ENCODE measurements at regions of chr13 and their contacts with region 1.

Region 1: GRCh38 chr13:27980280-27980998 is 8.1 kb downstream of the URAD start:
- H3K4me3 Mint-ChIP-seq: no peak overlapping the region
- H3K27ac Mint-ChIP-seq: no peak overlapping the region
- H3K4me1 Mint-ChIP-seq: peaks cover 23% of the 10 kb centered on the region
- H3K27me3 Mint-ChIP-seq: peaks cover 83% of the 10 kb centered on the region

Region 2: GRCh38 chr13:26971990-26972887 is 1008.2 kb before region 1 on chr13:
- intact Hi-C with region 1: loop called (anchors 10 kb)
- H3K4me3 Mint-ChIP-seq: no peak overlapping the region
- H3K27ac Mint-ChIP-seq: no peak overlapping the region
- H3K4me1 Mint-ChIP-seq: no peaks in the 10 kb centered on the region
- H3K27me3 Mint-ChIP-seq: no peaks in the 10 kb centered on the region

Region 3: DNA sequence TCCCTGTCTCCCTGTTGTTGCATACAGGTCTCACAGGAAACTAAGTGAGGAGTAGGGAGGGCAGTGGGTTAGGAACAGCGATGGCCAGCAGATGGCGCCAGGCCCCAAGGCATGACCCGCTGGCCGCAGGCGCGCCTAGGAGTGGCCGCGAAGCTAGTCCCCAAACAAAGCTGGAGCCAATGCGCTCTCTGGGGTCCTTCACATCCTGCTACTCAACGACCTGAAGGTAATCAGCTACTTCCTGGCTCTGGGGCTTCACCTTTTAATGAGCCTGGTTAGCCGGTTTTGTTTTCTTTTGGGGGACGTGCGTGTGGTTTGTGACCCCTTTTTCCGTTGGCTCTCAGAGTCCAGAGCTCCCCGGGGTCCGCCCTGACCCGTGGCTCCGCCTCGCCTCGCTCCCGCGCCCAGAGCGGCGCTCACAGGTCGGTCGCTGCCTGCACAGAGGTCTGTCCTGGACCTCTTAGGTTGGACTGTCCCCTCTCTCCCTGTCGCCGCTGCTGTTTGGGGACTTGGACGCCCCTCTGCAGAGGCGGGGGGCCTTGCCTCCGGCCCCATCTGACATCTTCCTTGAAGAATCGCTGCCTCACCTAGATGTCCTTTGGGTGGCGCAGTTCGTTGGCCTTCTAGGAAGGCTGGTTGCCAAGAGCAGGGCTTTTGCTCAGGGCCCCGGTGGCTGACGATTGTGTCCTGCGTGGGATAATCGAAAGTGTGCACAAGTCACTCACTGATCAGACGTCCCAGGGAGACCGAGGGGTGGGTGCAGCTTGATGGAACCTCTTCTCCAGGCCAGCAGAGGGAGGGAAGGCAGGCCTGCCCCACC is 618.2 kb before region 1 on chr13:
- intact Hi-C with region 1: loop called (anchors 1 kb)
- H3K4me3 Mint-ChIP-seq: peak overlapping the region; percentile 45
- H3K27ac Mint-ChIP-seq: no peak overlapping the region
- H3K4me1 Mint-ChIP-seq: no peaks in the 10 kb centered on the region
- H3K27me3 Mint-ChIP-seq: peaks cover 27% of the 10 kb centered on the region

Region 4: GRCh38 chr13:27374650-27375049 is 605.8 kb before region 1 on chr13:
- intact Hi-C with region 1: loop called (anchors 5 kb)
- H3K4me3 Mint-ChIP-seq: no peak overlapping the region
- H3K27ac Mint-ChIP-seq: no peak overlapping the region
- H3K4me1 Mint-ChIP-seq: no peaks in the 10 kb centered on the region
- H3K27me3 Mint-ChIP-seq: peaks cover 9% of the 10 kb centered on the region

Region 5: DNA sequence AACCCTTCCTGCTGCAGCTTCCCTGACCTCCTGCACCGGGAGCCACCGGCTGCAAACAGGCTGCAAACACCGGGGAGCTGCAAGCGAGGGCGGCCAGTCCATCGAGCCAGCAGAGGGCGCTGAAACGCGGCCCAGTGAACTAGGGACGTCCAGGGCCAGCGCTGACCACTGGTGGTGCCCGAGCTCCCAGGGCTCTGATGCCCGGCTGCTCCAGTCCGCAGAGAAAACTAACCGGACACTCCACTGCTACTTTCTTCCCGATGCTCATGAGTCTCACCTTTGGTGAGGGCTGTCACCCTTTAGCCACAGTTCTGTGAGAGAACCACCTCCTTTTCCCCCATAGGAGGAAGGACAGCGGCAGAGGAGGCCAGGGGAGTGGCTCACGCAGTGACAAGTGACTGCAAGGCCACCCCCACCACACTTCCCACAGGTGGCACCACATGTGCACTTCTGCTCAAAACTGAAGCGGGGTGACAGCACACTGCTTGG is 447.2 kb before region 1 on chr13:
- intact Hi-C with region 1: loop called (anchors 5 kb)
- H3K4me3 Mint-ChIP-seq: peak overlapping the region; percentile 51
- H3K27ac Mint-ChIP-seq: no peak overlapping the region
- H3K4me1 Mint-ChIP-seq: peaks cover 9% of the 10 kb centered on the region
- H3K27me3 Mint-ChIP-seq: peaks cover 3% of the 10 kb centered on the region

Measured in dendritic cell treated with granulocyte-macrophage colony-stimulating factor and Interleukin-4, amounts not matched to agents 40 ng/mL and 50 ng/mL, for 4 days (primary cell).